H1 (cell line): ENCODE measurements at regions of chr7 and their contacts with region 1.

Region 1: DNA sequence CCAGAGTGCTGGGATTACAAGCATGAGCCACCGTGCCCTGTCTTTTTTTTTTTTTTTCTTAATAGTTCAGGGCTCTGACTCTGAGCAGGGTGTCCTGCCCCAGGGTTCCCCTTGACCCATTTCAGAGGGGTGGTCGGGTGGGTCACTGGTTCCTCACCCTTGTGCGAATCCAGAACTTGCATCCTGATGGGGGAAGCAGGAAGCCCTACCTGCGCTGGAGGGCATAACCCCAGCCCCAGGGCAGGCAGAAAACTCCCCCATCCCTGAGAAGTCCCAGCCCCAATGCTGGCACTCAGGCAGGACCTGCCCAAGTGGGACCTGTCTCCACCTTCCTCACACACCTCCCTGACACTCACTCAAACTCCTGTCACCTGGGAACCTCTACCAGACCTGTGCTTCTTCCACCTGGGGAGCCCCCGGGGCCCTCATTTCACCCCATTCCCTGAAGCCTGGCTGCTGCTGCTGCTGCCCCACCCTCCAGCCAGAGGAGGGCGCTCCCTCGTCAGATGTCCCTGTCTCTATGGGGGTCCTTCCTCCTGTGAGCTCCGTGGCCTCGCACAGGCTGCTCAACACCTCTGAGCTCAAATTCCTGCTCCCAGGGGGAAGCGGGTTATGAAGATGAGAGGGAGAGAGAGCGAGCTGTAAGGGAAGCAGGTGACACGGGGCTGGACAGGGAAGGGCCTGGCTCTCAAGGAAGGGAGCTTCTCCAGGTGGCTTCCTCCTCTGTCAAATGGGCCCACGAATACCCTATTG is 15.1 kb upstream of the ZNF273 start:
- DNase-seq: peak; percentile 46 to 87
- H3K4me3 ChIP-seq: peak overlapping the region; percentile 28 to 70 (median 62); a peak in 7 of 8 replicates
- H3K27ac ChIP-seq: no peak overlapping the region
- H3K4me1 ChIP-seq: peaks cover 0 to 14% (median 3%) of the 10 kb centered on the region in 4 experiments; a peak in 5 of 7 replicates
- H3K27me3 ChIP-seq: peaks cover 18 to 37% (median 32%) of the 10 kb centered on the region in 4 experiments
- CTCF ChIP-seq: peak; percentile 75 to 93 (median 93)
- EP300 ChIP-seq: no peak
- POLR2A ChIP-seq: no peak
- RAD21 ChIP-seq: peak; percentile 83 to 85

Region 2: DNA sequence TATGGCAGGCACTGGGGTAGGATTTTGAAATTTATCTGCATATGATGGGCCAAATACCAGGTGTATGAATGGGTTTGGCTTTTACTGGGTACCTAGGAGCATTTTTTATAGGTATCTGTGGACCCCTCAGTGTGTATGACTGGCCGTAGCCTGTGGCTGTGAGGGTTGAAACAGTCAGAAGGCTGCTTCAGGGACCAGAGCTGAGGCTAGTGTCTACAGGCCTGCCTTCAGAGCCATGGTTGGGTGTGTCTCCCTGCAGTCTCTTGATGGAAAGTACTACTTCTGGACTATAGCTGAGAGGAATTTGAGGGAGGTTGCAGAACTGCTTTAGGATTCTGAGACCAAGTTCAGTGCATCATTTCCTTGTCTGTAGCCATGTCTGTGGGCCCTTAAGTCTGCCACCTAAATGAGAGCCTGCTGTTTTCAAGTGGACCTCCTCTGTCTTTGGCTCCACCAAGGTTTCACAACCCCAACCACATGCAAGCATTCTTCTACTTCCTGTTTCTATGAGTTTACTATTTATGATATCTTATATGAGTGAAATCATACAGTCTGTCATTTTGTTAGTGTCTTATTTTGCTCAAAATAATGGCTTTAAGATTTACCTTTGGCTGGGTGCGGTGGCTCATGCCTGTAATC is 113.6 kb before region 1 on chr7:
- CTCF ChIA-PET with region 1: no interaction called
- POLR2A ChIA-PET with region 1: no interaction called
- DNase-seq: no peak
- H3K4me3 ChIP-seq: no peak overlapping the region
- H3K27ac ChIP-seq: no peak overlapping the region
- H3K4me1 ChIP-seq: no peaks in the 10 kb centered on the region
- H3K27me3 ChIP-seq: no peaks in the 10 kb centered on the region
- CTCF ChIP-seq: no peak
- EP300 ChIP-seq: no peak
- POLR2A ChIP-seq: no peak
- RAD21 ChIP-seq: no peak

Region 3: GRCh38 chr7:64902806-64903721 is 15.1 kb after region 1 on chr7 and contains the start of gene ZNF273:
- CTCF ChIA-PET with region 1: interaction called, 10 read pairs
- POLR2A ChIA-PET with region 1: interaction called, 24 read pairs
- DNase-seq: peak; percentile 79 to 89
- H3K4me3 ChIP-seq: peak within 1 kb of the TSS; percentile 84 to 96 (median 90)
- H3K27ac ChIP-seq: peak within 1 kb of the TSS; percentile 90
- H3K4me1 ChIP-seq: peaks cover 0 to 7% (median 3%) of the 10 kb centered on the region in 4 experiments; a peak in 4 of 7 replicates
- H3K27me3 ChIP-seq: no peaks in the 10 kb centered on the region
- CTCF ChIP-seq: no peak
- EP300 ChIP-seq: no peak
- POLR2A ChIP-seq: peak; percentile 77 to 97
- RAD21 ChIP-seq: no peak
- total RNA-seq, gene ZNF273: 21.2 and 23.2 TPM in 2 replicates

Region 4: DNA sequence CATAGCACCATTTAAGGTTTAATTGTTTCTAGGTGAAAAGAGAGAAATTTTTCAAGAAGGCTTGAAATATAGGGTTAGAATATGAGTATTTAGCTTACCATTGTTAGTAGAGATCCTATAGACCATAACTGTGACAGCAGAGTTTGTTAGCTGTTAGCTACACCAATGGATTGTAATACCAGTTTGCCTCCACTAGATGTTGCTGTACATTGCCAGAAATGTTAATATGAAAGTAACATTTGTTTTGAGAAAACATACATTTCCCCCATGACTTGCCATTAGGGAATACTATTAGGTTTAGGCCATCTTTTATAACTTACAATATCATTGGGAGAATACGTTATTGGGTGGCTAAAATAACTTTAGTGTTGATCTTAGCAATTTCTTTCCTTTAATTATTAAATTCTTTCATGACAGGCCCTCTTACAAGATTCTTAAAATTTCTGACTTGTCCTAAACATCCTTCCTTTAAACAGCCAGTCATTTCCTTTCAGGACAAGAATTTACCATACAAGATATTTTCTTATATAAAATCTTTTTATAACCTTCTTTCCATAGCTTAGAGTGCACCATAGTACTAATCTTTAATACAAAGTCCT is 63.4 kb after region 1 on chr7:
- CTCF ChIA-PET with region 1: interaction called, 19 read pairs
- POLR2A ChIA-PET with region 1: no interaction called
- DNase-seq: no peak
- H3K4me3 ChIP-seq: no peak overlapping the region
- H3K27ac ChIP-seq: no peak overlapping the region
- H3K4me1 ChIP-seq: no peaks in the 10 kb centered on the region
- H3K27me3 ChIP-seq: peaks cover 2 to 10% (median 6%) of the 10 kb centered on the region in 4 experiments; a peak in 4 of 7 replicates
- CTCF ChIP-seq: peak in 2 of 3 experiments; percentile 39 to 76; a peak in 2 of 4 replicates
- EP300 ChIP-seq: no peak
- POLR2A ChIP-seq: no peak
- RAD21 ChIP-seq: peak; percentile 83 to 85